CD8-positive, alpha-beta memory T cell (primary cell): ENCODE measurements at regions of chr2 and their contacts with region 1.

Region 1: DNA sequence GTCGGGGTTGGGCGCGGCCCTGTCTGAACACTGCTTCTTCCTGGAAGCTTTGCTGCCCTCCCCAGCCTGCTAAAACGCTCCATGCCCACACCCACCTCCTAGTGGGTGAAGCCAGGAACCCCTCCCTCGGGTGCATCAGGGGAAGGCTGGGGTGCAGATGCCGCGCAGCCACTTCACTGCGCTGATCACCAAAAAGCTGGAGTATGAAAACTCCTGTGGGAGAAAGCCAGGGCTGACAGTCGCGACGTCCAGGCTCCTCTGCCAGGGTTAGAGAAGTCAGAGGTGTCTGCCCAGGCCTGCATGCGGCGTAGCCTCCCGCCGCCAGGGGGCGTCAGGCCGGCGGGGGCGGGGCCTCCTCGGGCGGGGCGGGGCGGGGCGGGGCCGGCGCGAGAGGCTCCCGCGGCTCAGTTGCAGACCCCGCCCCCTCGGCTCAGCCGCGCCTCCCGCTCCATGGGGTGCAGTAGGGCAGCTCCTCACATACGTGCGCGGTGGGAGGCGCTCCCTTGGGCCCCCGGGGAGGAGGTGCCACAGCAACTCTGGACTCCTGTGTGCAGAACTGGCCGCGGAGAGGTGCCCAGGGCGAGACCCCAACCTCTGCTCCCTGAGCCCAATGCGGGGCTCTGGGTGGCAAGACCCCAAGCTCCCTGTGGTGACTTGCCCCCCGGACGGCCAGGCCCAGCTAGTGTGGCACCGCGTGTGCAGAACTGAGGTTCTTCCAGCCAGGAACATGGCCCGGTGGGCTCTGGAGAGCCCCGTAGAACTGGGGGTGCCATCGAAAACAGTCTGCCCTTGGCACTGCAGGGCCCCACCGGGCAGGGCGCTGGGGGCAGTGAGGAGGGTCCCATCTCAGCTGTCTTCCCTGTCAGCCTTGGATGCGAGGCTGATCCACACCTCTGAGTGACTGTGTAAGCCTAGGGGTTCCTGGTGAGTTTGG is 1.8 kb upstream of the RNPEPL1 start:
- DNase-seq: peak; percentile 91 to 97 (median 95)
- H3K4me3 ChIP-seq: peak overlapping the region; percentile 96
- H3K4me3 Mint-ChIP-seq: peak overlapping the region; percentile 92 to 98 (median 96)
- H3K27ac ChIP-seq: peak overlapping the region; percentile 91
- H3K27ac Mint-ChIP-seq: peak overlapping the region; percentile 93 to 99 (median 98)
- H3K4me1 ChIP-seq: peaks cover 84% of the 10 kb centered on the region
- H3K4me1 Mint-ChIP-seq: peaks cover 66 to 87% (median 74%) of the 10 kb centered on the region in 3 donors
- H3K27me3 ChIP-seq: no peaks in the 10 kb centered on the region
- H3K27me3 Mint-ChIP-seq: no peaks in the 10 kb centered on the region

Region 2: DNA sequence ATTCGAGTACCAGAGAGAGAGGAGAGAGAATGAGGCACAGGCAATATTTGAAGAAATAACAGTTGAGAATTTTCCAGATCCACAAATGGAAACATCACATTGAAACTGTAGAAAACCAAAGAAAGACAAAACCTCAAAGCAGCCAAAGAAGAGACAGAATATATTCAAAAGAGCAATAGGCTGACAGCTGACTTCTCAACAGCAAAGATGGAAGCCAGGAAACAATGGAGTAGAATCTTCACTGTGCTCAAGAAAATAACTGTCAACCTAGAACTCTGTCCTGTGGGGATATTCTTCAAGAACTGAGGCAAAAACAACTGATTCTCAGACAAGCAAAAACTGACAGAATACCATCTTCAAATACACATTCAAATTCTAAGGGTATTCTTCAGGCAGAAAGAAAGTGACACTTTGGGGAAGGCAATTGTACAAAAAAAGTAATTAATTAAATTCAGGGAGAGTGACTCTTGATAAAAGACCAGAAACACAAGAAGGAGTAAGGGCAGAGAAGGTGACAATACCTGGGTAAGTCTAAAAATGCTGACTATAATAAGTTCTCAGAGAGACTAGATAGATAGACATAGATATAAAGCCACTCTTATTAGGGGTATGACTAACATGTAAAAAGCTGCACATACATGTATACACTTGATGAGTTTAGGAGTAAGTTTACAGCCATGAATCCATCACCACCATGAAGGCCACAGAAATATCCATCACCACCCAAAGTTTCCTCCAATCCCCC is 34.3 kb before region 1 on chr2:
- CTCF ChIA-PET with region 1: no interaction called
- POLR2A ChIA-PET with region 1: no interaction called
- DNase-seq: no peak
- H3K4me3 ChIP-seq: no peak overlapping the region
- H3K4me3 Mint-ChIP-seq: no peak overlapping the region
- H3K27ac ChIP-seq: no peak overlapping the region
- H3K27ac Mint-ChIP-seq: no peak overlapping the region
- H3K4me1 ChIP-seq: no peaks in the 10 kb centered on the region
- H3K4me1 Mint-ChIP-seq: peaks cover 8 to 16% (median 10%) of the 10 kb centered on the region in 3 donors
- H3K27me3 ChIP-seq: no peaks in the 10 kb centered on the region
- H3K27me3 Mint-ChIP-seq: no peaks in the 10 kb centered on the region

Region 3: GRCh38 chr2:240579771-240580614 is 13.5 kb after region 1 on chr2:
- CTCF ChIA-PET with region 1: interaction called, 68 read pairs
- POLR2A ChIA-PET with region 1: interaction called, 99 read pairs
- DNase-seq: peak; percentile 70 to 89 (median 76)
- H3K4me3 ChIP-seq: no peak overlapping the region
- H3K4me3 Mint-ChIP-seq: peak overlapping the region in 6 of 7 donors; percentile 8 to 69 (median 56)
- H3K27ac ChIP-seq: no peak overlapping the region
- H3K27ac Mint-ChIP-seq: peak overlapping the region; percentile 59 to 91 (median 84)
- H3K4me1 ChIP-seq: peaks cover 29% of the 10 kb centered on the region
- H3K4me1 Mint-ChIP-seq: peaks cover 33 to 53% (median 49%) of the 10 kb centered on the region in 3 donors
- H3K27me3 ChIP-seq: no peaks in the 10 kb centered on the region
- H3K27me3 Mint-ChIP-seq: no peaks in the 10 kb centered on the region

Region 4: DNA sequence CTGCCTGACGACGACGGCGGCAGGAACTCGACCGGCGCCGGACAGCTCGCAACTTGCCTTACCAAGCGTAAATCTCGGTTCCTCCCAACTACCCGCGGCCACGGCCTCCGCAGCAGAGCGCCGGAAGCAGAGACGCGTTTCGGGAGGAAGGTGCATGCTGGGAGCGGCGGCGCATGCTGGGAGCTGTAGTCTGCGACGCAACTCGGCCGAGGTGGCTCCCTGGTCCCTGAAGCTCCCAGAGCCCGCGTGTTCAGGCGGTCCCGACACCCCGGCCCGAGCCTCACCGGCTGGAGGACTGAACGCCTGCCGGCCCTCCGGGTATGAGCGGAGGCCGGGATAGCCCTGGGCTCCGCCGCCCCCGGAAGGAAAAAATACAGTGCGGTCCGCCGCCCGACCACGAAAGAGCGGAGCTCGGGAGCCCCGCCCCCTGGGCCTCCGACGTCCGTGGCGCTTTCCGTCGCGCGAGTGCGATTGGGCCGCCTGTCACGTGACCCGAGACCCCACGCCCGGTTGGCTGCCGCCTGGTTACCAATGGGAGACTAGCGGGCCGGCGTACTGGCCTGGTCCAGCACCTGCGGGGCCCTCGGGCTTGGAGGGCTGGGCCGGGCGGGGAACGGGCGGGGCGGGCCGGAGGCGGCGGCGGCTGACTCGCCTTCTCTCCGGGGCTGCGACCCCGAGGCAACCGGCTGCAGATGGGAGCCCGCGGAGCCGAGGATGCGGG is 19.9 kb after region 1 on chr2 and contains the start of gene CAPN10:
- CTCF ChIA-PET with region 1: interaction called, 68 read pairs
- POLR2A ChIA-PET with region 1: interaction called, 99 read pairs
- DNase-seq: peak; percentile 95 to 97 (median 96)
- H3K4me3 ChIP-seq: peak within 1 kb of the TSS; percentile 97
- H3K4me3 Mint-ChIP-seq: peak within 1 kb of the TSS; percentile 94 to 98 (median 95)
- H3K27ac ChIP-seq: peak within 1 kb of the TSS; percentile 80
- H3K27ac Mint-ChIP-seq: peak within 1 kb of the TSS; percentile 92 to 99 (median 98)
- H3K4me1 ChIP-seq: peaks cover 35% of the 10 kb centered on the region
- H3K4me1 Mint-ChIP-seq: peaks cover 47 to 73% (median 55%) of the 10 kb centered on the region in 3 donors
- H3K27me3 ChIP-seq: no peaks in the 10 kb centered on the region
- H3K27me3 Mint-ChIP-seq: peaks cover 0 to 2% of the 10 kb centered on the region in 2 donors
- total RNA-seq, gene CAPN10: 36.1 to 40.5 TPM

Region 5: GRCh38 chr2:240622531-240623235 is 56.2 kb after region 1 on chr2:
- CTCF ChIA-PET with region 1: interaction called, 24 read pairs
- POLR2A ChIA-PET with region 1: interaction called, 13 read pairs
- DNase-seq: peak in 3 of 5 donors; percentile 18 to 68 (median 44)
- H3K4me3 ChIP-seq: no peak overlapping the region
- H3K4me3 Mint-ChIP-seq: peak overlapping the region in 6 of 7 donors; percentile 54 to 81 (median 76)
- H3K27ac ChIP-seq: peak overlapping the region; percentile 10
- H3K27ac Mint-ChIP-seq: peak overlapping the region; percentile 87 to 99 (median 98)
- H3K4me1 ChIP-seq: peaks cover 72% of the 10 kb centered on the region
- H3K4me1 Mint-ChIP-seq: peaks cover 30 to 66% (median 47%) of the 10 kb centered on the region in 3 donors
- H3K27me3 ChIP-seq: no peaks in the 10 kb centered on the region
- H3K27me3 Mint-ChIP-seq: no peaks in the 10 kb centered on the region